Endothelial cell of umbilical vein (primary cell): ENCODE measurements at regions of chr7 and their contacts with region 1.

Region 1: DNA sequence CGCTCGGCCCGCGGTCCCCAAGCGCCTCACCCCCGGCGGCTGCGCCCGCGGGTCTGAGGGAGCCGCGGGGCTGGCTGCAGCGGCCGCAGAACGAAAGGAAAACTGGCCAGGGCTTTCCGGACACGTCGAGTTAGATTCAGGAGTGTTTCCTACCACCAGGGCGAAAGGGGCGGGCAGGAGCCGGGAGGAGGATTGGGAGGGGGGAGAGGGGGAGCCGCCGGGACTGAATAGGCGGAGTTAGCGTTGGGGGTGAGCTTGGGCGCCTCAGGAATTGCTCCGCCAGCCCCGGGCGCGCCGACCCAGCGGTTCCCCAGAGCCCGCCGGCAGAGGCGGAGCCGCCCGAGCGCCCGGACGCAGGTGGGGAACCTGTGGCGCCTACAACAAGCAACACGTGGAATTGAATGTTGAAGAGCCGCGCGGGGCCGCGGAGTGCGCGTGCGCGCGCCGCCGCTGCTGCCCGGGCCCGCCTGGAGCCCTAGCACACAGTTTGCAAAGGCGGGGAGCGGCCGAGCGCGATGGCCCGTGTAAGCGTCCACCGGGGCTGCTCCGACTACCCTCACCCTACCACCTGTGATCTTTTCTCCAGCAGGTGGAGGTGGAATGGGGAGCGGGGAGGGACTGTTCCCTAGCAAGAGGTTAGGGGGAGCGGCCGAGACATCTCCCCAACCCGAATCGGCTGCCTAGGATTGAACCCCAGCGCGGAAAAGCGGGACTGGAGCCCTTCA is at the start of gene CADPS2:
- DNase-seq: peak; percentile 92
- H3K4me3 ChIP-seq: peak within 1 kb of the TSS; percentile 51 to 92 (median 70)
- H3K27ac ChIP-seq: peak within 1 kb of the TSS; percentile 66
- H3K4me1 ChIP-seq: peaks cover 26% of the 10 kb centered on the region
- H3K27me3 ChIP-seq: no peaks in the 10 kb centered on the region
- CTCF ChIP-seq: peak; percentile 13 to 46
- POLR2A ChIP-seq: peak; percentile 84
- total RNA-seq, gene CADPS2: 20.0 and 22.6 TPM in 2 replicates

Region 2: GRCh38 chr7:122219253-122219865 is 667.2 kb before region 1 on chr7:
- CTCF ChIA-PET with region 1: no interaction called
- POLR2A ChIA-PET with region 1: no interaction called
- dilution Hi-C with region 1: no loop called
- intact Hi-C with region 1: loop called (anchors 1 kb)
- DNase-seq: peak; percentile 56
- H3K4me3 ChIP-seq: no peak overlapping the region
- H3K27ac ChIP-seq: no peak overlapping the region
- H3K4me1 ChIP-seq: no peaks in the 10 kb centered on the region
- H3K27me3 ChIP-seq: no peaks in the 10 kb centered on the region
- CTCF ChIP-seq: peak; percentile 30 to 33
- POLR2A ChIP-seq: no peak

Region 3: GRCh38 chr7:122457965-122458364 is 428.6 kb before region 1 on chr7:
- CTCF ChIA-PET with region 1: no interaction called
- POLR2A ChIA-PET with region 1: no interaction called
- dilution Hi-C with region 1: no loop called
- intact Hi-C with region 1: no loop called
- DNase-seq: no peak
- H3K4me3 ChIP-seq: no peak overlapping the region
- H3K27ac ChIP-seq: no peak overlapping the region
- H3K4me1 ChIP-seq: no peaks in the 10 kb centered on the region
- H3K27me3 ChIP-seq: no peaks in the 10 kb centered on the region
- CTCF ChIP-seq: no peak
- POLR2A ChIP-seq: no peak

Region 4: GRCh38 chr7:122550545-122550944 is 336.0 kb before region 1 on chr7:
- CTCF ChIA-PET with region 1: interaction called, 6 read pairs
- POLR2A ChIA-PET with region 1: no interaction called
- dilution Hi-C with region 1: no loop called
- intact Hi-C with region 1: loop called (anchors 1 kb)
- DNase-seq: peak; percentile 63
- H3K4me3 ChIP-seq: no peak overlapping the region
- H3K27ac ChIP-seq: no peak overlapping the region
- H3K4me1 ChIP-seq: no peaks in the 10 kb centered on the region
- H3K27me3 ChIP-seq: no peaks in the 10 kb centered on the region
- CTCF ChIP-seq: peak in 1 of 2 donors; percentile 20
- POLR2A ChIP-seq: no peak

Region 5: DNA sequence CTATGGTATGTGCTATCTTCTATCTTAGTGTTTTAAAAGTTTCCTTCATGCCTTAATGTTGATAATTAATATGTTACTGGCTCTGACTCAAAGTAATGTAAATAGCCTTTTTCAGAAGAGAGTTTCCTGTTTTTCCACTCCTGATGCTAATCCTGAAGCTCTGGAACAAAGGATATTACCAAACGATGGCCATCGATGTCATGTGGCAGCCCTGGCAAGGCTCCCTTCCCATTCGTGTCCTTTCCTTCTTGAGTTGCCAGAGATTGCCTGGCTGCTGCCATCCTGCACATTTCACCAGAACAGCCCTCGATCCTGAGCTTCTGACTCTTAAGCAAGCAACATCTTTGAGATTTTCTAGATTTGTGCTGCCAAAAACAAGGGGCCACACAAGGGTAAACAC is 233.6 kb before region 1 on chr7:
- CTCF ChIA-PET with region 1: interaction called, 3 read pairs
- POLR2A ChIA-PET with region 1: no interaction called
- dilution Hi-C with region 1: no loop called
- intact Hi-C with region 1: loop called (anchors 10 kb)
- DNase-seq: peak; percentile 95
- H3K4me3 ChIP-seq: no peak overlapping the region
- H3K27ac ChIP-seq: peak overlapping the region; percentile 29
- H3K4me1 ChIP-seq: peaks cover 13% of the 10 kb centered on the region
- H3K27me3 ChIP-seq: no peaks in the 10 kb centered on the region
- CTCF ChIP-seq: no peak
- POLR2A ChIP-seq: no peak

Region 6: DNA sequence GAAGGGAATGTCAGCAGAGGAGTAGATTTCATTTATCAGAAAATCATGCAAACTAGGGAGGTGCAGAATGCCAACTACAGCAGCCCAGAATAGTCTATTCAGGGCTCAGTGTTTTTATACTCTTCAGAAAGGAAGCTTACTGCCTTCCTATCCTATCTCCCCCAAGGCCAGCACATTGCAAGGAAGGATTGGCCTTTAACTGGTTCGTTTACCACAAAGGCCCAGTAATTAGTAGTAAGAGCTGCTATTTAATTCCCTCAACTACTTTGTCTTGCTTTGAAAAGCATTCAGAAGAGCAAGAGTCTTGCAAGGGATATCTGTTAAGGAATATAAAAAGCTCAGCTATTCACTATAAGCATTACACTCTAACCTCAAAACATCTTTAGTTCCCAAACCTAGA is 97.4 kb before region 1 on chr7:
- CTCF ChIA-PET with region 1: no interaction called
- POLR2A ChIA-PET with region 1: no interaction called
- dilution Hi-C with region 1: no loop called
- intact Hi-C with region 1: no loop called
- DNase-seq: no peak
- H3K4me3 ChIP-seq: no peak overlapping the region
- H3K27ac ChIP-seq: no peak overlapping the region
- H3K4me1 ChIP-seq: no peaks in the 10 kb centered on the region
- H3K27me3 ChIP-seq: no peaks in the 10 kb centered on the region
- CTCF ChIP-seq: no peak
- POLR2A ChIP-seq: no peak

Region 7: DNA sequence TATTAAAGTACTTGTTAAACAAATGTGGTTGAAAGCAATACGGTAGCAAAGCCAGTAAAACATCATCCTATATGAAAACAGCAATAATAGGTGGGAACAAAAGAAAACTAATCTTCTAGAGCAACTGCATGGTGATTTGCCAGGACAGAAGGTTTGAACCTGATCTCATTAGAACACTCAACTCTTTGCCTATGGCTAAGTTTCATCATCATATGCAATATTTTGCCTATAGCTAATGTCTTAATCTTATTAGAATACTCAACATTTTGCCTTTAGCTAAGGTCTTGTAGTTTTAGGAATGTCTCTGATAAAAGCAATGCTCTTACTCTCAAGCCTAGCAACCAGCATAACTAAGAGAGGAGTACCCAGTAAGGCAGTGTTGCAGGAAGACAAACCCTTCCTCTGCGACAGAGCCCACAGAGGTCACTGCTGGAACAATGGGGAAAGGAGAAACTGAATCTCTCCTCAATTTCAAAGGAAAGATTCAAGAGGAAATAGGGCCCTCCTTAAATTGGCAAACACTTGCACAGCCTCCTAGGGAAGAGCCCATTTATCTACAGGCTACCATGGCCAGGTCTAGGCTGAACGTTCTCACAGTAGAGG is 38.5 kb before region 1 on chr7:
- CTCF ChIA-PET with region 1: interaction called, 12 read pairs
- POLR2A ChIA-PET with region 1: no interaction called
- dilution Hi-C with region 1: no loop called
- intact Hi-C with region 1: loop called (anchors 1 kb)
- DNase-seq: peak; percentile 32
- H3K4me3 ChIP-seq: no peak overlapping the region
- H3K27ac ChIP-seq: no peak overlapping the region
- H3K4me1 ChIP-seq: peaks cover 33% of the 10 kb centered on the region
- H3K27me3 ChIP-seq: no peaks in the 10 kb centered on the region
- CTCF ChIP-seq: no peak
- POLR2A ChIP-seq: no peak